Common myeloid progenitor, CD34-positive (primary cell): ENCODE measurements at regions of chr5 and their contacts with region 1.

Region 1: GRCh38 chr5:132526290-132526973 is 16.9 kb downstream of the IL5 start:
- DNase-seq: peak; percentile 47 to 66 (median 60)
- H3K4me3 ChIP-seq: peak overlapping the region in 6 of 7 experiments; percentile 32 to 75 (median 42)
- H3K27ac ChIP-seq: no peak overlapping the region
- H3K4me1 ChIP-seq: peaks cover 22 to 67% (median 48%) of the 10 kb centered on the region in 4 experiments
- H3K27me3 ChIP-seq: no peaks in the 10 kb centered on the region

Region 2: DNA sequence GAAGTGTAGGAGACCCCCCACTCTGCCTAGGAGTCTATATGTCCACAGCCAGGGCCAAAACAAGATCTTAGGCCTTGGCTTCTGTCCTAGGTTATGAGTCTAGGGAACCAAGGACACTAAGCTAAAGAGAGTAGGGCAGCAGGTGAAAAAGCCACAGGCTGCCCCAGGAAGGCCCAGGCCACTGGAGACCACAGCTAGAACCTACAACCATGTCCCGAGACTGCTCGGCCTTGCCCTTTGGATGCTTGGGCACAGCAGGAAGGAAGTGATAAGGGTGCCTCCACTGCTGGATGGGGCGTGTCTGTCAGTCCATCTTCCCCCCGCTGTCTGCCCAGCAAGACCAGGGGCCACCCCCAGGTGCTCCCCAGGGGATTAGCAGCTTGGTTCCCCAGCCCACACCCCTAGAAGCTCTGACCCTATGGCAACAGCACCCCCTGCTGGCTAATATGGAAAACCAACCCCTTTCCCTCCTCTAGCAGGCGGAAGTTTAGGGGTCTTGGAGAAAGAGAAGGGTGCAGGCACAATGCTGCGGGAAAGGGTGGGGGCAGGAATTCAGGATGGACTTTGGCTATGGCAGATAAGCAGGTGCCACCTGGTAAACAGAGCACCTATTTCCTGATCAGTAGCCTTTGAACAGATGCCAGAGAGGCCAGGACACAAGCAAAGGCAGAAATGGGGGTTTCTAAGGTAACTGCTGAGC is 25.4 kb before region 1 on chr5:
- CTCF ChIA-PET with region 1: interaction called, 16 read pairs
- POLR2A ChIA-PET with region 1: no interaction called
- DNase-seq: peak; percentile 82 to 91 (median 91)
- H3K4me3 ChIP-seq: no peak overlapping the region
- H3K27ac ChIP-seq: peak overlapping the region in 1 of 2 experiments; percentile 35
- H3K4me1 ChIP-seq: peaks cover 0 to 40% (median 29%) of the 10 kb centered on the region in 4 experiments
- H3K27me3 ChIP-seq: no peaks in the 10 kb centered on the region

Region 3: DNA sequence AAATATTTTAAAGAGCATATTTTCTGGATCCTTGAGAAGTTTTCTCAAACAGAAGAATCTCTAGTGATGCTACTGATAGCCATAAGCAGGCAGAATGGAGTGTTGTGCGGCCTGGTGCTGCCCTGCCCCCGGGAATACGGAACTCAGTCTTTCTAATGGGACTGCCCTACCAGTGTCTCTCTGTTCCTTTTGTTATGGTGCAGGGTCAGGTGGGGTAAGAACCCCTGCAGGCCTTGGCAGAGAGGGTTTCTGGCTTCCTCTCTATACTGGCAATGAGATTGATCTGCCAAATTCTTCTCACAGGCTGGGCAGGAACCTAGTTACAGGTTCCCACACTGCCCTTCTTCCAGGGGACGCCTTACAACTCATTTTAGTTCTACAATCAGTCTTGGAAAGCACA is 14.3 kb after region 1 on chr5:
- CTCF ChIA-PET with region 1: interaction called, 19 read pairs
- POLR2A ChIA-PET with region 1: no interaction called
- DNase-seq: no peak
- H3K4me3 ChIP-seq: no peak overlapping the region
- H3K27ac ChIP-seq: no peak overlapping the region
- H3K4me1 ChIP-seq: no peaks in the 10 kb centered on the region
- H3K27me3 ChIP-seq: no peaks in the 10 kb centered on the region

Region 4: DNA sequence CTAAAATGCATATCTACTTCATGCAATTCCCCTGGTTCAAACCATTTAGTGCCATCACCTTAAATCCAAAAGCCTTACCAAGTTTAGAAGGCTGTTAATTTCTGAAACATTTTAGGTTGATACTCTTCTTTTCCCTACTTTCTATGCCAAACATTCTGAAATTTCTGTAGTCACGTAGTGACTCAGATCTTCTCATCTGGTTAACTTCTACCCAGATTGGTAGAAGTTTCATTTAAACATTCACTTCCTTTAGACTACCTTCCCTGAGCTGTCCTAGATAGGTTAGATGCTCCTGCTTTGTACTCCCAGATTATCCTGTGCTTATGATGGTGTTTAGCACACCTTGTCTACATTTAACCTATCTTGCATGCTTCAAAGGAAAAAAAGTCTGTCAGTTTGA is 40.2 kb after region 1 on chr5:
- CTCF ChIA-PET with region 1: interaction called, 10 read pairs
- POLR2A ChIA-PET with region 1: no interaction called
- DNase-seq: no peak
- H3K4me3 ChIP-seq: no peak overlapping the region
- H3K27ac ChIP-seq: no peak overlapping the region
- H3K4me1 ChIP-seq: no peaks in the 10 kb centered on the region
- H3K27me3 ChIP-seq: no peaks in the 10 kb centered on the region

Region 5: GRCh38 chr5:132595624-132596023 is 69.2 kb after region 1 on chr5:
- CTCF ChIA-PET with region 1: interaction called, 23 read pairs
- POLR2A ChIA-PET with region 1: no interaction called
- DNase-seq: no peak
- H3K4me3 ChIP-seq: no peak overlapping the region
- H3K27ac ChIP-seq: no peak overlapping the region
- H3K4me1 ChIP-seq: no peaks in the 10 kb centered on the region
- H3K27me3 ChIP-seq: no peaks in the 10 kb centered on the region

Region 6: GRCh38 chr5:132639706-132640130 is 113.3 kb after region 1 on chr5:
- CTCF ChIA-PET with region 1: interaction called, 12 read pairs
- POLR2A ChIA-PET with region 1: no interaction called
- DNase-seq: peak in 2 of 3 donors; percentile 37 to 52
- H3K4me3 ChIP-seq: peak overlapping the region in 1 of 7 experiments; percentile 13
- H3K27ac ChIP-seq: peak overlapping the region in 1 of 2 experiments; percentile 63
- H3K4me1 ChIP-seq: peaks cover 0 to 21% (median 6%) of the 10 kb centered on the region in 4 experiments
- H3K27me3 ChIP-seq: no peaks in the 10 kb centered on the region